ENCODE measurements at regions of chr12 and their contacts with region 1.

Region 1: DNA sequence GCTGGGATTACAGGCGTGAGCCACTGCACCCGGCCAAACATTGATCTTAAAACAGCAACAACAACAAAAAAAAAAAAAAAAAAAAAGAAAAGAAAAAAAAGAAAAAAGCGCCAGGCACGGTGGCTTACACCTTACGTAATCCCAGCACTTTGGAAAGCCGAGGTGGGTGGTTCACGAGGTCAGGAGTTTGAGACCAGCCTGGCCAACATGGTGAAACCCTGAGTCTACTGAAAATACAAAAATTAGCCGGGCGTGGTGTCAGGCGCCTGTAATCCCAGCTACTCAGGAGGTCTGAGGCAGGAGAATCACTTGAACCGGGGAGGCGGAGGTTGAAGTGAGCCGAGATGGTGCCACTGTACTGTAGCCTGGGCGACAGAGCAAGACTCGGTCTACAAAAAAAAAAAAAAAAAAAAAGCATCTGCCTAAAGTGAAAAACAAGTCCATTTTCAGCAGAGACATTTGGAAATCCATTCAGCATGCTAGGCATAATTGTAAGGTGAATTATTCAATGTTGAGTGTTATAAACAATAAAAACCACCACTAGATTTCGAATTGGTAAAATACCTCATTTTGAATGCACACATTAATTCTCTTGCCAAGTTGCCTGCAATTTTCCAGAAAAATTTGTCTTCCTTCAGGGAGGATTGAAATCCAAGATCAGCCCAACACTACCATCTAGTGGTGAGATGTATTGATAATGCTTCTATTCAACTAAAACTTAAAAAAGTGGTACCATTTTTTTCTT is 8.0 kb upstream of the CERS5 start:
- DNase-seq: peak; percentile 90

Region 2: GRCh38 chr12:50283229-50283923 is 108.2 kb after region 1 on chr12 and contains the start of gene LIMA1:
- in situ Hi-C with region 1: loop called (anchors 25 kb)
- DNase-seq: peak; percentile 85
- total RNA-seq, gene LIMA1: 48.5 and 53.5 TPM in 2 replicates